ENCODE measurements at regions of chr1 and their contacts with region 1.

Region 1: DNA sequence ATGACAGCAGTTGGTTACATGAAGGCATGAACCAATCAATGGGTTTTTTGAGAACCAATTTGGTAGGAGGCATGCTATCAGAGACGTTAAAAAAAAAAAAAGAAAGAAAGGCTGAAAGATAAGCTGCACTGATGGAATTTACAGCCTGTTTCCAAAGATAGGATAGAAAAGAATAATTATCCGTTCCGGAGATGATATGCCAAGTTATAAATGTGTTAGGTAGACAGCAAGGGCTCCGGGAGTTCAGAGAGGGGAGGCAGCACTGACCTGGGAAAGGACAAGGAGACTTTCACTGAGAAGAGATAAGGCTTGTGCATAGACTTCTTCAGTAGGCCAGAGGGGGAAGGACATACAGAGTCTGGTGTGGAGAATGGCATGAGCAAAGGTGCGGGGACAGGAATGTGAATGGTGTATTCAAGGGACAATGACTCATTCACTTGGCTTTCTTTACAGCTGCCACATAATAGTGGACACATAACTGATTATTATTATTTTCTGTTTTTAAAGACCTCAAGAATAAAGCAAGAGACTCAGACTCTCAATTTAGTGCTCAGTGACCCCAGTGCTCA is 24.8 kb upstream of the ACBD6 start:
- DNase-seq: no peak
- H3K4me3 ChIP-seq: no peak overlapping the region
- H3K27ac ChIP-seq: no peak overlapping the region
- H3K4me1 ChIP-seq: no peaks in the 10 kb centered on the region
- H3K27me3 ChIP-seq: no peaks in the 10 kb centered on the region
- CTCF ChIP-seq: no peak
- POLR2A ChIP-seq: no peak

Region 2: DNA sequence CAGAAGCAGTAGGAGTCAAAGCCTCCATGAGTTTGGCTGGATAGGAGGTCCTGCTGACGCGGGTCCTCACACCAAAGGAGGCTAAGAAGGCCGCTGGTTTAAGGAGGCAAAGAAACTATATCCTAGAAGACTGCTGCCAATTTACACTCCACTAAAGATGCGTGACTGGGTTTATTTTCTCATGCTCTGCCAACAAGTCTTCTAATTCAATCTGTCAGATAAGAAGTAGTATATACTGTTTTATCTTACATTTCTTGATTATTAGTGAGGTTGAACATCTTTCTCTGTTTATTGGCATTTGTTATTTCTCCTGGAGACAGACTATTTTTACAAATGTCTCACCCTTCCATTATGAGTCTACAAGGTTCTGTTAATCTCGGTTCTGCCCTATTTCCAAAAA is 58.9 kb before region 1 on chr1:
- intact Hi-C with region 1: no loop called
- DNase-seq: no peak
- H3K4me3 ChIP-seq: no peak overlapping the region
- H3K27ac ChIP-seq: no peak overlapping the region
- H3K4me1 ChIP-seq: no peaks in the 10 kb centered on the region
- H3K27me3 ChIP-seq: no peaks in the 10 kb centered on the region
- CTCF ChIP-seq: no peak
- POLR2A ChIP-seq: no peak

Region 3: GRCh38 chr1:180623579-180624347 is 96.6 kb after region 1 on chr1:
- intact Hi-C with region 1: loop called (anchors 10 kb)
- DNase-seq: no peak
- H3K4me3 ChIP-seq: no peak overlapping the region
- H3K27ac ChIP-seq: no peak overlapping the region
- H3K4me1 ChIP-seq: no peaks in the 10 kb centered on the region
- H3K27me3 ChIP-seq: no peaks in the 10 kb centered on the region
- CTCF ChIP-seq: no peak
- POLR2A ChIP-seq: no peak

Region 4: GRCh38 chr1:181284978-181285377 is 757.8 kb after region 1 on chr1:
- intact Hi-C with region 1: no loop called
- DNase-seq: no peak
- H3K4me3 ChIP-seq: no peak overlapping the region
- H3K27ac ChIP-seq: no peak overlapping the region
- H3K4me1 ChIP-seq: no peaks in the 10 kb centered on the region
- H3K27me3 ChIP-seq: no peaks in the 10 kb centered on the region
- CTCF ChIP-seq: no peak
- POLR2A ChIP-seq: no peak